Right ventricle myocardium inferior (tissue), 1 donor: ENCODE measurements at regions of chr2 and their contacts with region 1.

Region 1: GRCh38 chr2:54438271-54438670 is 17.9 kb upstream of the SPTBN1 start:
- DNase-seq: peak; percentile 77
- ATAC-seq: peak; percentile 80

Region 2: GRCh38 chr2:53826587-53827397 is 611.5 kb before region 1 on chr2:
- intact Hi-C with region 1: no loop called
- DNase-seq: no peak
- ATAC-seq: peak; percentile 83

Region 3: GRCh38 chr2:54360055-54360792 is 78.0 kb before region 1 on chr2:
- intact Hi-C with region 1: loop called (anchors 5 kb)
- DNase-seq: peak; percentile 68
- ATAC-seq: peak; percentile 93

Region 4: GRCh38 chr2:54422072-54422581 is 16.1 kb before region 1 on chr2:
- intact Hi-C with region 1: no loop called
- DNase-seq: no peak
- ATAC-seq: no peak

Region 5: GRCh38 chr2:54570925-54571694 is 132.8 kb after region 1 on chr2:
- intact Hi-C with region 1: loop called (anchors 5 kb)
- DNase-seq: no peak
- ATAC-seq: peak; percentile 69

Region 6: GRCh38 chr2:55425431-55425831 is 987.2 kb after region 1 on chr2:
- intact Hi-C with region 1: no loop called
- DNase-seq: no peak
- ATAC-seq: no peak